Activated B cell treated with CpG ODN at 0.5 μM for 24 hours (primary cell): ENCODE measurements at regions of chr1 and their contacts with region 1.

Region 1: DNA sequence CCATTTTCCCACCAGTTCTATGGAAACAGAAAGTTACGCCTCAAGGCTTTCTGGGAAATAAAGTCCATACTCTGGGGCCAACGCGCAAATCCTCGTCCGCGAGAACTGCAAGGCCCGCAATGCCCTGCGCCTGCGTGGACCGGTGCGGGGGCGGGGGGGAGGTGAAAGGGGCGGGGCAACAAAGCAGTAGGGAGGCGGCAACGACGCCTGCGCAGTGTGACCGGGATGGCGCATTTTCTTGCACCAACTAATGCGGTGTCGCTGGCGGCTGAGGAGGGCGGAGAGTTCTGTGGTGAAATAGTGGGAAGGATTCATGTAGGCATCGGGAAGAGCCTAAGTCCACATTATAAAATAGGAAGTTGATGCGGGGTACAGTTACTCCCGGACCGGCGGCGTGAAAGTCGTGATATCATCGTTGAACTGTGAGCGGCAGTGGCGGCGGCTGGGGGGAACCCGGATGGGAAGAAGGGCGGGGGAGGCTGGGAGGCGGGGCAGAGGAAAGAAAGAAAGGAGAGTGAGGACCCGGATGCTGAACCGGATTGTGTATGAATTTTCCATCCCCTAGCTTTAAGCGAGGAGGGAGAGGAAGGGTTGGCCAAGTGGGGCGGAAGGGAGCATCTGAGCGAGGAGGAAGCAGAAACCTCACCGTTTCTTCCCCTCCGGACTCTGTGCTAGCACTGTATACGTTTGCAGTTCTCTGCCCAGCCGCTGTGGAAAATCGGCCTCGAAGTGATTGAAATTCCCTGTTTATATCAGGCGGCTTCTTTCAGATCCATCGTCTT is at the start of gene GGPS1:
- DNase-seq: peak; percentile 90
- ATAC-seq: peak; percentile 75
- H3K4me3 Mint-ChIP-seq: no peak within 1 kb of the TSS
- H3K27ac Mint-ChIP-seq: no peak within 1 kb of the TSS
- H3K4me1 Mint-ChIP-seq: peaks cover 27% of the 10 kb centered on the region
- H3K27me3 Mint-ChIP-seq: no peaks in the 10 kb centered on the region
- CTCF ChIP-seq: no peak
- total RNA-seq, gene GGPS1: 25.4 and 33.8 TPM in 2 replicates

Region 2: DNA sequence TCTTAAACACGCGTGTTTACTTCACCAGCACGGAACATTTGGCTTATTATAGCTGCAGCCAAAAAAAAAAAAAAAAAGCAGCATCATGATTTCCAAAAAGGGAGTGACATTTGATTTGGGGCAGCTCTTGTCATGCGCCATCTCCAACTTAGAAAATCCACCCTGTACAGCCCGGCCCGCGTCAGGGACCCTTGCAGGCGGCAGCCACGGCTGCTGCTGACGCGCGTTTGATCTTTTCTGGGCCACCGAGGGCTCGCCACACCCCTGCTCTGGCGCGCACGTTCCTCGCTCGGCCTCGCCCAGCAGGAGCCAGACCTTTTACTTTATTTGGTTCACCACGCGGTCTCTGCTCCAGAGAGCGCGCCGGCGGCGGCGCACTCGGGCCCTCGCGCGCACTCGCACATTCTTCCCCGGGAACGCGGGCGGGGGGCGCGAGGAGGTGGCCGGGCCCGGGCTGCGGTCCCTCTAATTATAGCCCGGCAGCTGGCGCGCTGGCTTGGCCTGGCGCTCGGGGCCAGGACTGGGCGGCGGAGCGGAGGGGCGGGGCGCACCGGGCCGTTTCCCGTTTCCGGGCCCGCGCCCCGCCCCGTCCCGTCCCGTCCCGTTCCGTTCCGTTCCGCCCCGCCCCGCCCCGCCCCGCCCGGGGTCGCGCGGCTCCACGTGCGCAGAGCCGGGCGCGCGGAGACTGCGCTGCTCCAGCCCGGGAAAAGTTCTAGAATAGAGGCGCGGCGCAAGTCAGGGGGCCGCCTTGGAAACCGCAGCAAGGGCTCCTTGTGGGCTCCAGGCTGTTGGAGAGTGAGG is 728.7 kb before region 1 on chr1:
- CTCF ChIA-PET with region 1: no interaction called
- POLR2A ChIA-PET with region 1: no interaction called
- intact Hi-C with region 1: loop called (anchors 5 kb)
- DNase-seq: peak; percentile 67
- ATAC-seq: peak; percentile 73
- H3K4me3 Mint-ChIP-seq: peak overlapping the region; percentile 86
- H3K27ac Mint-ChIP-seq: peak overlapping the region; percentile 89
- H3K4me1 Mint-ChIP-seq: peaks cover 66% of the 10 kb centered on the region
- H3K27me3 Mint-ChIP-seq: no peaks in the 10 kb centered on the region
- CTCF ChIP-seq: no peak

Region 3: DNA sequence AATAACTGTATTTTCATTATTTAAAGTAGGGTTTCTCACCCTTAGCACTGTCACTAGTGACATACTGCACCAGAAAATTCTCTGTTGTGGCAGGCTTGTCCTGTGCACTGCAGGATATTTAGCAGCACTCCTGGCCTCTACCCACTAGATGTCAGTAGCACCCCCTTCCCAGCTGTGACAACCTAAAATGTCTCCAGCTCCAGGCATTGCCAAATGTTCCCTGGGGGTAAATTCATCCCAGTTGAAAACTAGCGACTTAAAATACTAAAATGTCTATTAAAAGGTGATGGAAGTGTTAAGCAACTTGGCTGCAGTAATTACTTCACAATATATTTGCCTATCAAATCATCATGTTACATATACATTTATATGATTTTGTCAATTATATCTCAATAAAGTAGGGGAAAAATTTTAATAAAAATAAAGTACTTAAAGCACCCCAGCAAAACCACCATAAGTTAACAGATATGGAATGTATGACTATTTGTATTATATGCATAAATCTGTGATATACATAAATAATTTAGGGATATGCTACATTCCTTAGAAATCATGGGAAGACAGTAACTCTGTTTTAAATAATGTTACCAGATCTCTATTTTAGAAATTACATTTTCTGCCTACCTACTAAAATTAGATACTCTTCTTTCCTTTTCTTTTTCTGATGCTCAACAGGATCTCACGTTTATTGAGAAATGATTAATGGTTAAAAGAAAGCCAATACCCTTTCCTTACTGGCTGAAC is 75.2 kb before region 1 on chr1:
- CTCF ChIA-PET with region 1: interaction called, 9 read pairs
- POLR2A ChIA-PET with region 1: interaction called, 3 read pairs
- intact Hi-C with region 1: loop called (anchors 1 kb)
- DNase-seq: no peak
- ATAC-seq: peak; percentile 97
- H3K4me3 Mint-ChIP-seq: no peak overlapping the region
- H3K27ac Mint-ChIP-seq: no peak overlapping the region
- H3K4me1 Mint-ChIP-seq: peaks cover 18% of the 10 kb centered on the region
- H3K27me3 Mint-ChIP-seq: no peaks in the 10 kb centered on the region
- CTCF ChIP-seq: peak; percentile 89

Region 4: DNA sequence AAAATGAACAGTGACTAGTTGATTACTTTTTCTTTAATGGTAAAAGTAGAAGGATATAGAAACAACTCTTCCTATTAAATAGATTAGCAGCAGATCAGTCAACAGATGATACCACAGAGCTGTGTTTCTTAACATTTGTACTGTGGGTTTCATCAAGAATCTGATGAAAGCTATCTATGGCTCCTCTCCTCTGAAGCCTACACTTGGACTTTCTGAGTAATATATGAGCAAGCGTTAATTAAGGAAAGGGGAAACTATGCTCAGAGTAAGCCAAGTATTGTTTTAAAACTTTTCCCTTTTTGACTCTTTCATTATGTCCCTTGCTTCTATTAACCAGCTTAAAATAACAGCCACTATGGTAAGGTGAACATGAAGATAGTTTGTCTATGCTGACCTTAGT is 11.4 kb before region 1 on chr1:
- CTCF ChIA-PET with region 1: no interaction called
- POLR2A ChIA-PET with region 1: interaction called, 5 read pairs
- intact Hi-C with region 1: loop called (anchors 1 kb)
- DNase-seq: no peak
- ATAC-seq: no peak
- H3K4me3 Mint-ChIP-seq: no peak overlapping the region
- H3K27ac Mint-ChIP-seq: no peak overlapping the region
- H3K4me1 Mint-ChIP-seq: peaks cover 72% of the 10 kb centered on the region
- H3K27me3 Mint-ChIP-seq: no peaks in the 10 kb centered on the region
- CTCF ChIP-seq: no peak

Region 5: GRCh38 chr1:236156512-236157208 is 828.1 kb after region 1 on chr1:
- CTCF ChIA-PET with region 1: no interaction called
- POLR2A ChIA-PET with region 1: no interaction called
- intact Hi-C with region 1: loop called (anchors 2 kb)
- DNase-seq: peak; percentile 44
- ATAC-seq: peak; percentile 85
- H3K4me3 Mint-ChIP-seq: peak overlapping the region; percentile 52
- H3K27ac Mint-ChIP-seq: peak overlapping the region; percentile 83
- H3K4me1 Mint-ChIP-seq: peaks cover 57% of the 10 kb centered on the region
- H3K27me3 Mint-ChIP-seq: peaks cover 2% of the 10 kb centered on the region
- CTCF ChIP-seq: no peak